ENCODE measurements at regions of chr7 and their contacts with region 1.

Region 1: GRCh38 chr7:132443776-132444520 is 132.3 kb downstream of the PLXNA4 start:
- DNase-seq: no peak
- ATAC-seq: no peak

Region 2: DNA sequence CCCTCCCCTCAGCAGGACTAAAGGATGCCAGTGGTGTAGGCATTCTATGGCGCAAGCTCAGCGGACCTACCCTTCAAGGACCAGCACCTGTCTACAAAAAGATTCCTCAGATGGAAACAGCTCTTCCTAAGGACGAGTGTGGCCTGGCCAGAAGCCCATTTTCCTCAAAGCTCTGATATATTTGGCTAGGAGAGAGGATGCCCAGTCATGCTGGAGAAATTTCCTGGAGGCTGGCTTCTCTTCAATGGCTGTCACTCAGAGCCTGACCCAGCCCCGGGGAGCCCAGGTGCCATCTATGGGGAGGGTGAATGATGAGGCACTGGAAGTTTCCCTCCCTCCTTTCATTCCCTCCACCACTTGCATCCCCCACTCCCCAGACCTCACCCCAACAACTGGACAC is 20.8 kb after region 1 on chr7:
- intact Hi-C with region 1: loop called (anchors 2 kb)
- DNase-seq: no peak
- ATAC-seq: peak; percentile 70

Region 3: DNA sequence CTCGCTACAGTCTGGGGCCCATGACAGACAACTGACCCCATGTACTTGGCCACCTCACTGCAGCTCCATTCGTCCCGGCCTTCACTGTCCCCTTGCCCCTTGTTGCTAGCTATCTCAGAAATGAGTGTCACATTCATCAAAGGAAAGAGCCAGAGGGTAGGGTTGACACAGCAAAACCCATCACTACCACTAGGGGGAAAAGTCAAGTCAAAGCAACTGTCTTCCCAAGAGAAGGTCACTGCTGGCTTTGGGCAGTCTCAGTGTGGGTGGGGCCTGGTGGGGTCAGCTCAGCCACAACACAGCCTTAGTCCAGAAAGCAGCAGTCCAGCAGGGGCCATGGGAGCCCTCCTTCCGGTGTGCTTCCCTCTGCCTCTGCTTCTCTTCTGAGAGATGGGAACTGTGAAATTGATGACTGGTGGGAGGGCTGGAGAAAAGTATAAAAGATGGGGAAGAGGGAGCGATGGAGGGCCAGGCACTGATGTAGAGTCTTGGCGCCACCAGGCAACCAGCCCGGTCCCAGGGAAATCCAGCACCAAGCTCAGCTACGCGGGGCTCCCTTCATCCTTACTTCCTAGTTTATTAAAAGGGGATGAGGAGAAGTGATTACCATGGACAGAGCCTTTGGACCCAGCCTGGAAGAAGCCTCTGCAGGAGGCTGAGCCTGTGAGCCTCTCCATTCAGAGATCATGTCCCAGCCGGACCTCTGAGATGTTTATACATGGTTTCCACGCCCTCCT is 74.3 kb after region 1 on chr7:
- intact Hi-C with region 1: loop called (anchors 5 kb)
- DNase-seq: no peak
- ATAC-seq: no peak